ENCODE measurements at regions of chr3 and their contacts with region 1.

Region 1: DNA sequence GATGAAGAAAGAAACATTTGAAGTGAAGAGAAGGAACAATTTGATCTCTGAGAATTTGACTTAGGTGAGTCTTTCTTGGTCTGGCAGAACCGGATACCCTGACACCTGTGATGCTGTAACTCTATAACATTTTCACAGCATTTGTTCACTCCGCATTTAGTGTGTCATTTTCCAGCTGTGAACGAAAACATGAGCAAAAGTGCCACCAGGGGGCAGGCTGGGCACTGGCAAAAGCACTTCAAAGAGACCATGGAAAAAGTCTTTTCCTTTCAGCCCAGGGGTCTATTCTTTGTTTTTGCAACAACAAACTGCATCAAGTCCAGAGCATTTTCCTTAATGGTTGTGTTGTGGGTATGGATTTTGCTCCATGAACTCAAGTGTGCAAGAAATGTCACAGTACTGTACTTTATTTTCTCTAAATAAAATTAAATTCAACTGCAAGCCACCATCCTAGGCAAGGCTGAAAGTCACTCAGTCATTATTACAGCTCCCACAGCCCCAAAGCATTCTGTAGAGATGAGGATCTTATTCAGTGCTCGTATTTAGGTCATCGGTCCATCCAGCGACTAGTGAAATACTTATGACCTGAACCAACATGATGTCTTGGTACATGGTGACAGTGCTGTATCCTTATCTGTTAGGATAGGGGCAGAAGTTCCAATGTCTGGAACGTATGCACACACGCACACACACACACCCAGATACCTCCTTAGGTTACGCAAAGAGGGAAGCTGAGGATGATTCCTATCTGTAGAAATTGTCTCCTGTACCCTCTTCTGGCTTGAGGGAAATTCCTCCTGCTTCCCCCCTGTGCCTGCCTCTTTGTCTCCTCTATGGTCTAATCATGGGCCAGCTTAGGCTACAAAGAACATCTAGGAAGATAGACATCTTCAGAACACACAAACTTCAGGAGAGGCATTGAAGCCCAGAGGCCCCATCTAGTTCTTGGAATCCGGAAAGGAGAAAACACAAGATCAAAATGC is 125.5 kb downstream of the GADL1 start:
- DNase-seq: peak; percentile 74 to 84
- ATAC-seq: peak; percentile 36 to 76 (median 56)
- H3K4me3 ChIP-seq: no peak overlapping the region
- H3K27ac ChIP-seq: no peak overlapping the region
- H3K4me1 ChIP-seq: peaks cover 28% of the 10 kb centered on the region
- H3K27me3 ChIP-seq: no peaks in the 10 kb centered on the region
- CTCF ChIP-seq: peak; percentile 83

Region 2: GRCh38 chr3:30871720-30872119 is 102.7 kb after region 1 on chr3:
- intact Hi-C with region 1: loop called in 1 of 2 experiments (anchors 5 kb)
- DNase-seq: no peak
- ATAC-seq: no peak
- H3K4me3 ChIP-seq: no peak overlapping the region
- H3K27ac ChIP-seq: peak overlapping the region; percentile 59
- H3K4me1 ChIP-seq: peaks cover 30% of the 10 kb centered on the region
- H3K27me3 ChIP-seq: no peaks in the 10 kb centered on the region
- CTCF ChIP-seq: no peak

Region 3: GRCh38 chr3:30894538-30895251 is 125.7 kb after region 1 on chr3 and contains the start of gene GADL1:
- intact Hi-C with region 1: loop called in 1 of 2 experiments (anchors 5 kb)
- DNase-seq: peak; percentile 43 to 78
- ATAC-seq: peak; percentile 76 to 92 (median 90)
- H3K4me3 ChIP-seq: peak within 1 kb of the TSS; percentile 74
- H3K27ac ChIP-seq: peak within 1 kb of the TSS; percentile 79
- H3K4me1 ChIP-seq: peaks cover 9% of the 10 kb centered on the region
- H3K27me3 ChIP-seq: no peaks in the 10 kb centered on the region
- CTCF ChIP-seq: no peak
- total RNA-seq, gene GADL1: 0.96 to 5.6 (median 1.5) TPM

Region 4: GRCh38 chr3:31132132-31132769 is 363.3 kb after region 1 on chr3:
- intact Hi-C with region 1: loop called (anchors 2 to 5 kb)
- DNase-seq: no peak
- ATAC-seq: peak; percentile 68 to 91 (median 77)
- H3K4me3 ChIP-seq: no peak overlapping the region
- H3K27ac ChIP-seq: no peak overlapping the region
- H3K4me1 ChIP-seq: no peaks in the 10 kb centered on the region
- H3K27me3 ChIP-seq: no peaks in the 10 kb centered on the region
- CTCF ChIP-seq: peak; percentile 81

Region 5: GRCh38 chr3:31531992-31532586 is 763.1 kb after region 1 on chr3:
- intact Hi-C with region 1: loop called in 1 of 2 experiments (anchors 10 kb)
- DNase-seq: peak; percentile 99 to 100
- ATAC-seq: peak; percentile 94 to 97 (median 96)
- H3K4me3 ChIP-seq: peak overlapping the region; percentile 88
- H3K27ac ChIP-seq: peak overlapping the region; percentile 99
- H3K4me1 ChIP-seq: peaks cover 27% of the 10 kb centered on the region
- H3K27me3 ChIP-seq: no peaks in the 10 kb centered on the region
- CTCF ChIP-seq: no peak

Measured in psoas muscle (tissue), 8 donors.